Activated B cell treated with CpG ODN at 0.5 μM for 24 hours (primary cell): ENCODE measurements at regions of chr6 and their contacts with region 1.

Region 1: DNA sequence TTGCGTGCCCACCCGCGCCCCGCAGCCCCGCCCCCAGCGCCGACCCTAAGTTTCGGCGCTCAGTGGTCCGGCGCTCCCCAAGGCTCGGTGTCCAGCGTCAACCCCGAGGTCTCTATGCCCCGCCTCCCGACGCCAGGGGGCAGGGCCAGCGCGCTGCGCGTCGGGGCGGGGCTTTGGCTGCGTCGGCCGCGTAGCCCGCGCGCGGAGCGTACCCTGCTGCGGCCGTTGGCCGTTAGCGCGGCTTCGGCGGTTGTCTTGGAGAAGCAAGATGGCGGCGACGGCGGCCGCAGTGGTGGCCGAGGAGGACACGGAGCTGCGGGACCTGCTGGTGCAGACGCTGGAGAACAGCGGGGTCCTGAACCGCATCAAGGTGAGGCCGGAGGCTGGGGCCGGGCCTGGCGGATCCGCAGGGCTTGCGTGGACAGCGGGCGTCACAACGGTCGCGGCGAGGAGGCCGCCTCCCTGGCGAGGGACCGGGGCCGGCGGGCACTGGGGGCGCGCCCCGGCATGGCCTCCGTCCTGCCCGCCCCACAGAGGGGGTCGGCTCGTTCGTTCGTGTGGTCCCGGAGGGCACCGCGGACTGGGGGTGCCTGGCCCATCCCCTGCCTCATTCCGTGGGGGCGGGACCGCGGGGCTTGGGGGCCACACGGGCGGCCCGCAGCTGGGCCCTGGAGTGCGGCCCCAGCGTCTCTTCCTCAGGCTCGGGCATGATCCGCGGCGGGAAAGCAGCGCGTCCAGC is at the start of gene CEP43:
- DNase-seq: peak; percentile 95
- ATAC-seq: peak; percentile 96
- H3K4me3 Mint-ChIP-seq: peak within 1 kb of the TSS; percentile 90
- H3K27ac Mint-ChIP-seq: peak within 1 kb of the TSS; percentile 66
- H3K4me1 Mint-ChIP-seq: peaks cover 29% of the 10 kb centered on the region
- H3K27me3 Mint-ChIP-seq: no peaks in the 10 kb centered on the region
- CTCF ChIP-seq: no peak
- total RNA-seq, gene CEP43: 26.8 and 31.0 TPM in 2 replicates

Region 2: DNA sequence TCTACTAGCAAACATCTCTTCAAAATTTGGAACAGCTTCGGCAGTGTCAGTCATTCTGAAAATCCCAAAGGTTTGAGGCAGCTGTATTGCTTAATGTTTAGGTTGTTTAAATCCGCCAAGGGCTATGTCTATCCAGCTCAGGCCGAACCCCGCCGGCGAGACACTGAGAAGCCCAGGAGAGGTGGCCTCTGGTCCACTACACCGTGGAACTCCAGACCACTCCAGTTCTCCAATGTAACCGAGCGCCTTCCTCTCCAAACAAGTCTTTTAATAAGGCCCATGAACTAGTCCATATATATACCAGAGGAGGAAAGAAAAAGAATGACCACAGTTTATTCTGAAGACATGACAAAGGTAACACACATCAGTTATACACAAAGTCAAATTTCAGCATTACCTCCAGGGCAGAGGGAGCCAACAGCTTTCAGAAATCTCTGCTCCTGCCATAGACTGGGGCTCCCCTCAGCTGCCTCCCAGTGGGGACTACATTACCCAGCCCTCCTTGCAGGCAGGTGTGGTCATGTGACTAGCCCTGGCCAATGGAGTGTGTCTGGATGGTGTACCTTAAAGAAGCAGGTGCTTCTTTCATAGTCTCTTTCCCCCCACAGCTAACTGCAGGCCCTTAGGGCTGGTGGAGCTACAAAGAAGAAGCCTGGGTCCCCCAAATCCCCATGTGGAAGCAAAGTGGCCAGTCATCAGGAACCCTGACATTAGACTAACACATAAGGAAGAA is 412.7 kb before region 1 on chr6 and contains the start of gene RAMACL:
- CTCF ChIA-PET with region 1: no interaction called
- POLR2A ChIA-PET with region 1: no interaction called
- intact Hi-C with region 1: loop called (anchors 5 kb)
- DNase-seq: no peak
- ATAC-seq: peak; percentile 60
- H3K4me3 Mint-ChIP-seq: no peak within 1 kb of the TSS
- H3K27ac Mint-ChIP-seq: peak within 1 kb of the TSS; percentile 71
- H3K4me1 Mint-ChIP-seq: peaks cover 42% of the 10 kb centered on the region
- H3K27me3 Mint-ChIP-seq: no peaks in the 10 kb centered on the region
- CTCF ChIP-seq: no peak
- total RNA-seq, gene RAMACL: 1.8 and 2.3 TPM in 2 replicates

Region 3: GRCh38 chr6:166904101-166904746 is 95.1 kb before region 1 on chr6:
- CTCF ChIA-PET with region 1: no interaction called
- POLR2A ChIA-PET with region 1: no interaction called
- intact Hi-C with region 1: no loop called
- DNase-seq: no peak
- ATAC-seq: peak; percentile 51
- H3K4me3 Mint-ChIP-seq: peak overlapping the region; percentile 7
- H3K27ac Mint-ChIP-seq: no peak overlapping the region
- H3K4me1 Mint-ChIP-seq: peaks cover 44% of the 10 kb centered on the region
- H3K27me3 Mint-ChIP-seq: no peaks in the 10 kb centered on the region
- CTCF ChIP-seq: no peak

Region 4: GRCh38 chr6:167020206-167020605 is 20.9 kb after region 1 on chr6:
- CTCF ChIA-PET with region 1: no interaction called
- POLR2A ChIA-PET with region 1: no interaction called
- intact Hi-C with region 1: loop called (anchors 2 kb)
- DNase-seq: no peak
- ATAC-seq: peak; percentile 87
- H3K4me3 Mint-ChIP-seq: peak overlapping the region; percentile 73
- H3K27ac Mint-ChIP-seq: peak overlapping the region; percentile 59
- H3K4me1 Mint-ChIP-seq: peaks cover 12% of the 10 kb centered on the region
- H3K27me3 Mint-ChIP-seq: no peaks in the 10 kb centered on the region
- CTCF ChIP-seq: no peak

Region 5: DNA sequence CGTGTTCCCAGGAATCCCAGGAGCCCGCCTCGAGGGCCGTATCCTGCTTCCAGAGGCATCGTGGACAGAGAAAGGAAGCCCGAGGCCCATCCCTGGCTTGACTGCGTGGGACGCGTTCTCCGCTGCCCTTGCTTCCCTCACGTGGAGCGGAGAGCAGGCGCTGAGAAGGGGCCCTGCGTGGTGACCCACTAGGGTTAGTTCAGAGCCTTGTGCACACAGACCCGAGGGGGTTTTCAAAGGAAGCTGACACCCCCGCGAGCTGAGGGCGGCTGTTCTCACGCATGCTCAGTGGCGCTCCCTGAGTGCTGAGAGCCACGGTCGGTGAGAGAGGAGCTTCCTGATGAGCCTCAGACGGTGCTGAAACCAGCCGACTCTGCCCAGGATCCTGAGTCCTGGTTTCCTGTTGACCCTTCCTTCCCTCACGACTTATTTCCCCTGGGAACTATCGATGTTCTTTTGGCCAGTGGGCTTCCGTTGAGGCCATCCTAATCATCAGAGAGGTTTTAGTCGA is 94.7 kb after region 1 on chr6:
- CTCF ChIA-PET with region 1: no interaction called
- POLR2A ChIA-PET with region 1: interaction called, 49 read pairs
- intact Hi-C with region 1: loop called (anchors 1 kb)
- DNase-seq: peak; percentile 84
- ATAC-seq: peak; percentile 48
- H3K4me3 Mint-ChIP-seq: peak overlapping the region; percentile 94
- H3K27ac Mint-ChIP-seq: peak overlapping the region; percentile 100
- H3K4me1 Mint-ChIP-seq: peaks cover 100% of the 10 kb centered on the region
- H3K27me3 Mint-ChIP-seq: no peaks in the 10 kb centered on the region
- CTCF ChIP-seq: no peak

Region 6: GRCh38 chr6:167141667-167142432 is 142.5 kb after region 1 on chr6:
- CTCF ChIA-PET with region 1: interaction called, 50 read pairs
- POLR2A ChIA-PET with region 1: interaction called, 13 read pairs
- intact Hi-C with region 1: loop called (anchors 1 kb)
- DNase-seq: peak; percentile 62
- ATAC-seq: peak; percentile 73
- H3K4me3 Mint-ChIP-seq: peak overlapping the region; percentile 46
- H3K27ac Mint-ChIP-seq: peak overlapping the region; percentile 79
- H3K4me1 Mint-ChIP-seq: peaks cover 61% of the 10 kb centered on the region
- H3K27me3 Mint-ChIP-seq: no peaks in the 10 kb centered on the region
- CTCF ChIP-seq: no peak